ENCODE measurements at regions of chr4 and their contacts with region 1.

Region 1: GRCh38 chr4:168923526-168924194 is 86.4 kb downstream of the CBR4 start:
- H3K4me3 Mint-ChIP-seq: no peak overlapping the region
- H3K27ac Mint-ChIP-seq: no peak overlapping the region
- H3K4me1 Mint-ChIP-seq: no peaks in the 10 kb centered on the region
- H3K27me3 Mint-ChIP-seq: no peaks in the 10 kb centered on the region

Region 2: GRCh38 chr4:168183717-168184608 is 739.7 kb before region 1 on chr4:
- intact Hi-C with region 1: loop called (anchors 10 kb)
- H3K4me3 Mint-ChIP-seq: no peak overlapping the region
- H3K27ac Mint-ChIP-seq: no peak overlapping the region
- H3K4me1 Mint-ChIP-seq: peaks cover 11% of the 10 kb centered on the region
- H3K27me3 Mint-ChIP-seq: no peaks in the 10 kb centered on the region

Region 3: DNA sequence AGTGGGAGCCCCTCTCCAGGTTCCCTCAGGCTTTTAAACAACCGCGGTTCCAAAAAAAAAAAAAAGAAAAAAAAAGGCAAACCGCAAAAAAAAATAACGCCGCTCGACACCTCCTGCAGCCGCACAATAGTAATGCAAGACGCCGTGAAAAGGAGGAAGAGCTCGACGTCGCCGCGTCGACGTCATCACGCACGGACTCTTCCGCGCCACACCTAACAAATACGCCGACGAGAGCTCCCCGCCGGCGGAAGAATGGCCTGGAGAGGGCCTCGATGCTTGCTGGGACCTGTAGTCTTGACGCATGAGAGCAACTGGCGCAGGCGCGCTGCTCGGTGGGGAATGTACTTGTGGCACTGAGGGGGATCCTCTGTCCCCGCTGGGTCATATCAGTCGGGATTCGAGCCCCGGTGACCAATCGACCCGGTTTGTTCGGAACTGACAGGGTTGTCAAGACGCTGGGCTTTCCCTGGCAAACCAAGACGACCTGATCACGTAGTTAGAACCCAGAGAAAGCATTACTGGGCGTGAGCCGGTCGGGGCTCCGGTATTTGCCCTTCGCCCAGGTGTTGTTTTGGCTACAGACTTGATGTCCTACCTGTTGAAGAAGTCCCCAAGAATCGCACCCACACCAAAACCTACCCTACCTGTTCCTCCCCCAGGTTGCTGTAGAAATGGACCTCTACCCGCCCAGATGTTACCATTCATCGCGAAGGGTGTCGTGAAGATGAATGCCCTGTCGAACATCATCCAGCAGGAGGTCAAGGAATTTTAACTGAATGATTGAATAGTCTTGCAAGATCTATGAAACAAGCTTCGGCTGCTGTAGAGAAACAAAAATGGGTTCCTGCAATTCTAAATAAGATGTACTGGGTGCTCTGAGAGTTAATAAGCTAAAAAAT is 86.7 kb after region 1 on chr4 and contains the start of gene CBR4:
- intact Hi-C with region 1: loop called (anchors 2 kb)
- H3K4me3 Mint-ChIP-seq: peak within 1 kb of the TSS; percentile 90
- H3K27ac Mint-ChIP-seq: peak within 1 kb of the TSS; percentile 96
- H3K4me1 Mint-ChIP-seq: peaks cover 19% of the 10 kb centered on the region
- H3K27me3 Mint-ChIP-seq: no peaks in the 10 kb centered on the region

Region 4: GRCh38 chr4:169485791-169486742 is 562.4 kb after region 1 on chr4:
- intact Hi-C with region 1: loop called (anchors 2 kb)
- H3K4me3 Mint-ChIP-seq: no peak overlapping the region
- H3K27ac Mint-ChIP-seq: no peak overlapping the region
- H3K4me1 Mint-ChIP-seq: no peaks in the 10 kb centered on the region
- H3K27me3 Mint-ChIP-seq: no peaks in the 10 kb centered on the region

Measured in dendritic cell treated with granulocyte-macrophage colony-stimulating factor and Interleukin-4, amounts not matched to agents 40 ng/mL and 50 ng/mL, for 4 days (primary cell).